Panc1 (cell line): ENCODE measurements at regions of chr5 and their contacts with region 1.

Region 1: GRCh38 chr5:55377810-55378209 is 70.0 kb downstream of the MTREX start:
- DNase-seq: no peak
- ATAC-seq: no peak
- H3K4me3 ChIP-seq: no peak overlapping the region
- H3K27ac ChIP-seq: no peak overlapping the region
- H3K4me1 ChIP-seq: no peaks in the 10 kb centered on the region
- H3K27me3 ChIP-seq: no peaks in the 10 kb centered on the region
- CTCF ChIP-seq: no peak

Region 2: DNA sequence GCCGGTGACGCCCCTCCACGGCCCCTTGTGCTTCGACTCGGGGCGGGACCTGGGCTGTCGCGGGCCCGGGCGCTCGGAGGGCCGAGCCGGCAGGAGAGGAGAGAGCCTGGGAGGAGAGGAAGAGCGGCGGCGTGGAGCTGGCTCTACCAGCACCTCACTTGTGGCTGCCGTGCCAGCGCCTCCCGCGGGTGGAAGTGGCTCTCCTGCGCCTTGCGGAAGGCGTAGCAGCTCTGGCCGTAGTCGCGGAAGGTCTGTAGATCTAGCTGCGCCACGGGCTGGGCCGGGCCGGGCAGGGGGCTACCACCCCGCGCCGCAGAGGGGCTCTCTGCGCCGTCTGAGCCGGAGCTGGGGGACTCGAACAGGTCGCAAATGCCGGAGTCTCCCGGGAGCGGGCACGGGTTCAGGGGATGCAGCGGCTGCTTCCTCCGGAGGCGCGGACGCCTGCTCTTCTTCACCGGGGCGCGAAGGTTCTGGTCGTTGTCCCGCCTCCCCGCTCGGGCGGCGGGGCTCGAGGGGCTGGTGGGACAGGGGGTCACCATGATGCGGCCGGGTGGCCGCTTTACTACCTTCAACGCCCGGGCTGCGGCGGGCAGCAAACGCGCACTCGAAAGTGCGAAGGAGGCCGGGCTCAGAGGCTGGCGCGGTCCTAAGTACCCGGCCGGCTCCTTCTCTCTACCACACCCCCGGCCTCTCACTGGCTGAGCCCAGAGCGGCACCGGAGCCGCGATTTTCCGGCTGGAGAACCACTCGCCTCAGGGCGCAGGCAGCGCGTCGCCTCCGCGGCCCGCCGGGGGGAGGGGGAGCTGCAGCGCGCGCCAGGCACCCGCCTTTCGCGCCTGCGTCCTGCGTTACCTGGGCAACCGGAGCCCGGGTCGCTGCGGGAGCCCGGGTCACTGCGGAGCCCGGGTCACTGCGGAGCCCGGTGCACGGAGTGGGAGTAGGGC is 144.6 kb before region 1 on chr5 and contains the start of gene CCNO:
- CTCF ChIA-PET with region 1: no interaction called
- POLR2A ChIA-PET with region 1: no interaction called
- in situ Hi-C with region 1: no loop called
- intact Hi-C with region 1: no loop called
- DNase-seq: no peak
- ATAC-seq: peak; percentile 91
- H3K4me3 ChIP-seq: peak within 1 kb of the TSS; percentile 60 to 89
- H3K27ac ChIP-seq: peak within 1 kb of the TSS; percentile 72
- H3K4me1 ChIP-seq: peaks cover 12% of the 10 kb centered on the region
- H3K27me3 ChIP-seq: peaks cover 3% of the 10 kb centered on the region; the same call in 1 of the 2 replicates
- CTCF ChIP-seq: no peak
- total RNA-seq, gene CCNO: 12.3 TPM

Region 3: DNA sequence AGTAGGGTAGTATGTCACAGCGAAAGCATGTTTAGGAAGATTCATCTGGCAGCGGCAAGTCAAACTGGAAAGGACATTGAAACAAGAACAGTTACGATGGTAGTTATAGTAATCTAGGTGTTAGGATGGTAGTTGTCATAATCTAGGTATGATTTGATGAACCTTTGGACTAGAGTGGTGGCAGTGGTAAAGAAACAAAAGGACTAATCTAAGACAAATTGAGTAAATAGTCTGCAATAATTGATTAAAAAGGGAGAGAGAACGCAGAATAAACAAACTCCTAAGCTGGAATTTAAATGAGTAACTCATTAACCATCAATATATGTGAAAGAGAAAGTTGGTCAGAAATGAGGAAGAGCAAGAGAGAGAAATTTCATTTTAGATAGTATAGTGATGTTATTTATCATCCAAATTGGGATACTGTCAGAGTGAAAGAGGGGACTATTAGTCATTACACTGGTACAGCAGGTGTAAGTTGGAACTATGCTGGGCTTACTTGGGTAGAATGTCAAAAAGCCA is 13.2 kb before region 1 on chr5:
- CTCF ChIA-PET with region 1: interaction called, 17 read pairs
- POLR2A ChIA-PET with region 1: interaction called, 3 read pairs
- in situ Hi-C with region 1: no loop called
- intact Hi-C with region 1: no loop called
- DNase-seq: no peak
- ATAC-seq: no peak
- H3K4me3 ChIP-seq: no peak overlapping the region
- H3K27ac ChIP-seq: no peak overlapping the region
- H3K4me1 ChIP-seq: no peaks in the 10 kb centered on the region
- H3K27me3 ChIP-seq: no peaks in the 10 kb centered on the region
- CTCF ChIP-seq: no peak